Naive thymus-derived CD4-positive, alpha-beta T cell (primary cell): ENCODE measurements at regions of chr15 and their contacts with region 1.

Region 1: DNA sequence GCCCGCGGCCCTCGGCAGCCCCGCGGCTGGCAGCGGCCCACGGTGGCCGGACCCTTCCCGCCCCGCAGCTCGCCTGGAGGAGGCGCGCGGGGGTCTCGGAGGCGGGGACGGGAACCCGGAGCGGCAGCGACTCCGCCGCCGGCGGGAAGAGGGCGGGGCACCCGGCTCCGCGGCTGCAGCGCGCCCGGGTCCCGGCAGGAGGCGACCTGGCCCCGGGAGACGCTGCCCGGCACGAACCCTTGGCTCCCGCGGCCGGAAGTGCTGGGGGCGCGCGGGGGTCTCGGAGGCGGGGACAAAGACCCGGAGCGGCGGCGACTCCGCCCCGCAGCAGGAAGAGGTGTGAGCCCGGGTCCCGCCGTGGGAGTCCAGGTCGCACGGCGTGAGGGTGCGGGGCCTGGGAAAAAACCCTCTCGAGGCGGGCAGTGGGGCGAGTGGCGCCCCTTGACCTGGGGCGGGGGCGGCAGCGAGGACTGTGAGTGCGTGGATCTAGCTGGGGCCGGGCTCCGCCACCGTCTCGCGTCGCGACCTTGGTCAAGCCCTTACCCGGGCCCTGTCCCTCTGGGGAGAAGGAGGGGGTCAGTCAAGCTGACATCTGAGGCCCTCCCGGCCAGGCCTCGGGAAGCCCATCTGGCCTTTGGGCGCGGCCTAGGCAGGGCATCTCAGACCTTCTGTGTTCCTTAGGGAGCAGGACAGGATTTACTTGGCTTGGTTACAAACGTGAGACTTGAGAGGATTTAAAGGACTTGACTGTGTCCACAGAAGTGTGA is at the start of gene CIB2:
- DNase-seq: peak; percentile 67 to 90 (median 78)
- ATAC-seq: peak; percentile 90
- H3K4me3 ChIP-seq: peak within 1 kb of the TSS; percentile 74
- H3K4me3 Mint-ChIP-seq: peak within 1 kb of the TSS; percentile 80 to 89 (median 84)
- H3K27ac ChIP-seq: peak within 1 kb of the TSS; percentile 86
- H3K27ac Mint-ChIP-seq: peak within 1 kb of the TSS; percentile 68 to 93 (median 89)
- H3K4me1 ChIP-seq: peaks cover 10 to 11% of the 10 kb centered on the region in 2 donors
- H3K4me1 Mint-ChIP-seq: peaks cover 10 to 37% (median 21%) of the 10 kb centered on the region in 7 donors
- H3K27me3 ChIP-seq: no peaks in the 10 kb centered on the region
- H3K27me3 Mint-ChIP-seq: peaks cover 0 to 2% (median 0%) of the 10 kb centered on the region in 5 donors
- total RNA-seq, gene CIB2: 1.0 to 2.0 (median 1.7) TPM

Region 2: DNA sequence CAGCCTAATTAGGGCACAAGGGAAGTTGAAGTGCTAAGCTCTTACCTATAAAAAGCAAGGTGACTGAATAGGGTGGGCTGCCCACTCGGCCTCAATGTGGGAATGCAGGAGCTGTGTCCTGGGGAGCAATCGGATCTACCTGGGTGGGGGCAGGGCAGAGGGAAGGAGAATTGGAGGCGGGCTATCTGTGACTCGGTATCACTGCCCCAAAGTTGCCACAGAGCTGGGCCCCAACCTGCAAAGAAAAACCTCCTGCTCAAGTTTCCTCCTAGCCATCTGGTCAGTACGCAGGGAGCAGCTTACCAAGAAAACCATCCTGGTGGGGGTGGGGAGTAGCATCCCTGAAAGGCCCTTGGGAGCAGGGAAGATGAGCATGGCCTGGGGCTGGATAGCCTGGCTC is 11.0 kb before region 1 on chr15:
- CTCF ChIA-PET with region 1: interaction called, 13 read pairs
- POLR2A ChIA-PET with region 1: no interaction called
- intact Hi-C with region 1: no loop called
- DNase-seq: no peak
- ATAC-seq: no peak
- H3K4me3 ChIP-seq: no peak overlapping the region
- H3K4me3 Mint-ChIP-seq: no peak overlapping the region
- H3K27ac ChIP-seq: no peak overlapping the region
- H3K27ac Mint-ChIP-seq: no peak overlapping the region
- H3K4me1 ChIP-seq: no peaks in the 10 kb centered on the region
- H3K4me1 Mint-ChIP-seq: peaks cover 0 to 4% (median 0%) of the 10 kb centered on the region in 7 donors
- H3K27me3 ChIP-seq: no peaks in the 10 kb centered on the region
- H3K27me3 Mint-ChIP-seq: peaks cover 0 to 7% (median 0%) of the 10 kb centered on the region in 5 donors

Region 3: DNA sequence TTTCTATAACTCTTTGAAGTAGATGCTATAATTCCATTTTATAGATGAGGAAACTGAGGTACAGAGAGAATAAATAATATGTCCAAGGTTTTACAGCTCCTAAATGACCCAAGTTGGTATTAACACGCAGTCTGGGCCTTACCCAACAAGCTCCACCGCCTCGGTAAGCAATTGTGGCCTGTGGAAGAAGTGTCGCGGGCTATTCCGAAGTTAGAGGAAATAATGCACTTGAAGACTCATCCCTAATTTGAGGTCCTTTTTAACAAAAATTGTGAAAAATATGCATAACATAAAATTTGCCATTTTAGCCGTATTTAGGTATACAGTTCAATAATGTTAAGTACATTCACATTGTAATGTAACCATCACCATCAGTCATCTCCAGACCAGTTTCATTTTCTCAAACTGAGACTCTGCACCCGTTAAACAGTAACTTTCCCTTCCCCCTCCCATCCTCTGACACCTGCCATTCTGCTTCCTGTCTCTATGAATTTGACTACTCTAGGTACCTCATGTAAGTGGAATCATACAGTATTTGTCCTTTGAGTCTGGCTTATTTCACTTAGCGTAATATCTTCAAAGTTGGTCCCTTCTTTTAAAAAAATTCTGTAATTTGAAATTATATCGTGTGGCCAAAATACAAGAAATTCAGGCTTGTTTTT is 35.9 kb after region 1 on chr15:
- CTCF ChIA-PET with region 1: no interaction called
- POLR2A ChIA-PET with region 1: no interaction called
- intact Hi-C with region 1: loop called in 1 of 2 experiments (anchors 5 kb)
- DNase-seq: peak in 6 of 9 donors; percentile 20 to 57 (median 46)
- ATAC-seq: peak; percentile 63
- H3K4me3 ChIP-seq: no peak overlapping the region
- H3K4me3 Mint-ChIP-seq: peak overlapping the region in 8 of 10 donors; percentile 5 to 54 (median 19)
- H3K27ac ChIP-seq: no peak overlapping the region
- H3K27ac Mint-ChIP-seq: peak overlapping the region in 7 of 9 donors; percentile 3 to 63 (median 47)
- H3K4me1 ChIP-seq: peaks cover 8 to 10% of the 10 kb centered on the region in 2 donors
- H3K4me1 Mint-ChIP-seq: peaks cover 6 to 48% (median 13%) of the 10 kb centered on the region in 7 donors
- H3K27me3 ChIP-seq: no peaks in the 10 kb centered on the region
- H3K27me3 Mint-ChIP-seq: no peaks in the 10 kb centered on the region

Region 4: GRCh38 chr15:78177447-78177873 is 46.0 kb after region 1 on chr15:
- CTCF ChIA-PET with region 1: no interaction called
- POLR2A ChIA-PET with region 1: no interaction called
- intact Hi-C with region 1: loop called (anchors 2 to 5 kb)
- DNase-seq: peak in 2 of 9 donors; percentile 23 to 40
- ATAC-seq: peak; percentile 44
- H3K4me3 ChIP-seq: no peak overlapping the region
- H3K4me3 Mint-ChIP-seq: no peak overlapping the region
- H3K27ac ChIP-seq: no peak overlapping the region
- H3K27ac Mint-ChIP-seq: no peak overlapping the region
- H3K4me1 ChIP-seq: peaks cover 0 to 17% of the 10 kb centered on the region in 2 donors
- H3K4me1 Mint-ChIP-seq: peaks cover 19 to 31% (median 24%) of the 10 kb centered on the region in 7 donors
- H3K27me3 ChIP-seq: no peaks in the 10 kb centered on the region
- H3K27me3 Mint-ChIP-seq: no peaks in the 10 kb centered on the region

Region 5: DNA sequence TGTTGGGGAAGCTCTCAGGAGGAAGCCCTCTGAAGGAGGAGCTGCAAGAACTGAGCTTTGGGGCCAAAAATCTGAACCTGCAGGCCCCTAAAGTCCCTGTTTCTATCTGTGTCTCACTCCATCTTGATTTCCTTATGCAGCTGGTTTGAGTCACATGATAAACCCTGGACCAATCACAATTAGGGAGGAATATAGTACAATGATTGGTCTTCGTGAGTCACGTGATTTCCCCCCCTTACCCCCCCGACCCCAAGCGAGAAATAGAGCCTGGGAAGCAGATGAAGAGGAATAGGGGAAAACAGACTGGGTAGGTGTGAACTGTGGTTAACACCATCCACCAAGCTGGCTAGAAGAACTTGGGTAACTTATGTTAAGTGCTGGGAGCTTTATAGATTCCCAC is 221.6 kb after region 1 on chr15:
- CTCF ChIA-PET with region 1: no interaction called
- POLR2A ChIA-PET with region 1: no interaction called
- intact Hi-C with region 1: no loop called
- DNase-seq: no peak
- ATAC-seq: no peak
- H3K4me3 ChIP-seq: no peak overlapping the region
- H3K4me3 Mint-ChIP-seq: no peak overlapping the region
- H3K27ac ChIP-seq: no peak overlapping the region
- H3K27ac Mint-ChIP-seq: no peak overlapping the region
- H3K4me1 ChIP-seq: peaks cover 0 to 6% of the 10 kb centered on the region in 2 donors
- H3K4me1 Mint-ChIP-seq: no peaks in the 10 kb centered on the region
- H3K27me3 ChIP-seq: no peaks in the 10 kb centered on the region
- H3K27me3 Mint-ChIP-seq: peaks cover 4 to 19% (median 10%) of the 10 kb centered on the region in 5 donors